Ascending aorta (tissue), 2 donors: ENCODE measurements at regions of chr11 and their contacts with region 1.

Region 1: GRCh38 chr11:19679952-19680828 is 32.4 kb upstream of the NAV2 start:
- DNase-seq: peak; percentile 81 to 98
- H3K4me3 ChIP-seq: no peak overlapping the region
- H3K27ac ChIP-seq: peak overlapping the region; percentile 87 to 93
- H3K4me1 ChIP-seq: peaks cover 11 to 71% of the 10 kb centered on the region in 2 donors
- H3K27me3 ChIP-seq: no peaks in the 10 kb centered on the region
- CTCF ChIP-seq: peak in 2 of 3 experiments; percentile 18 to 32

Region 2: DNA sequence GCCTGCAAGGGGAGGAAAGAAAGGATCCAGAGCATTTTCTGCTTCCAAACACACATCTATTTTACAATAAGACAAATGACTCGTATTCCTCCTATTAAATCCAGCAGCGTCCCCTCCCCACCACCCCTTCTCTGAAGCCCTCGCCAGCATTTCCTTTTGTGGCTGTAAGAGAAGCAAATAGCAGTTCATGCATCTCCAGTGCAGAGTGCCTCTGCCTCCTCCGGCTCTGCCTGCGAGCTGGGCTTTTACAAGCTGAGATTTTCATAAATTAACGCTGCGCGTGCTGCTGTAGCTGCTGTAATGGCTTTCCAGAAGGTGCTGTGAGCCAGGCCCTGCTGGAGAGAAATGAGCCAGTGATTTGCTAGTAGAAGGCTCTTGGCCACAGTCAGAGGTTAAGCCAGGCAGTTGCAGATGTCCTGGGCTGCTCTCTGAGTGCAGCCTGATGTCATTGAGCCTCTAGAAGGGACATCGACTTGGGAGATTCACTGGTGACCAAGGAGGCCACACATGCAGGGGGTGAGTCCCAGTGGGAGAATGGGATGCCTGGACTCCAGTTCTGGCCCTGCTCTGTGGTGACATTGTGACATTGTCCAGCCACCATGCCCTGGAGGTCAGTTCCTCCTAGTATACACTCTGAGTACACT is 102.1 kb before region 1 on chr11:
- intact Hi-C with region 1: loop called (anchors 5 kb)
- DNase-seq: peak in 1 of 2 donors; percentile 91
- H3K4me3 ChIP-seq: peak overlapping the region in 1 of 2 donors; percentile 52
- H3K27ac ChIP-seq: peak overlapping the region; percentile 93 to 98
- H3K4me1 ChIP-seq: peaks cover 43 to 72% of the 10 kb centered on the region in 2 donors
- H3K27me3 ChIP-seq: no peaks in the 10 kb centered on the region
- CTCF ChIP-seq: peak in 1 of 3 experiments; percentile 29

Region 3: DNA sequence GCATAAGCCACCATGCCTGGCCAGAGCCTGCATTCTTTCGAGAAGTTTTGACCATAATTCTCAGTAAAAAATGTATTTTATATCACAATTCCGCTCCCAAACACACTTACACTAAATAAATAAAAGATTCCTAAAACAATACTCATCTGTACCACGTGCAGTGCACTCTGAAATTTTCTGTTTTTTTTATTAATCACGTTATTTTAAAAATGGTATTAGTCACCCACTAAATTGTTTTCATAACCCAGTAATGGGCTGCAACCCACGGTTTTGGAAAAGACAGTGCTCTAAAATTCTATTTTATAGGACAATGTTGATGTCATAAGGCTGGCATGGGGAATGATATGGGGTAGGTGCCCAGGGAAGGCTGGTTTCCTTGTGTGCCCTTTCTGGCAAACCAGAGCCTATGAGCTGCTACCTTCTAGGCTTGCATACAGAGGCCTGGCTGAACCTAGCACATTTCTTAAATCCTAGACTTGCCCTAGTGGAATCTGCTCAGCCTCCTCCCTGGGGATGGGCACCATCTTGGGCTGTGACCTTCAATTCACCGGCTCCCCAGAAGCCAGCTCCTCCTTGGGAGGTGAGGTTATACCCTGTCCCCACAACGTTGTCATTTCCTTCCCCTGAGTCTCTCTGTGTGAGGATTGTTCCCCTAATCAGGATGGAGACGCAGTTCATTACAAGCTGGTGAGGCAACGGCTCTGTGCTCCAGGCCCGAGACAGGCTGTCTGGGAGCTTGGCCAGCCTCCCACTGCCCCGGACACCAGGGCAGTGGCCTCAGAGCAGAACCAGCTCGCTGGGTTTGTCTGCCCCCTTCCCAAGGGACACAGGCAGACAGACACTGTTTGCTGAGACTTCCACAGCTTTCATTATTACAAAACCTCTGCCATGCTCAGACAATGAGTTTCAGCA is 84.1 kb before region 1 on chr11:
- intact Hi-C with region 1: loop called (anchors 1 kb)
- DNase-seq: peak; percentile 64 to 95
- H3K4me3 ChIP-seq: peak overlapping the region in 1 of 2 donors; percentile 60
- H3K27ac ChIP-seq: peak overlapping the region; percentile 82 to 93
- H3K4me1 ChIP-seq: peaks cover 18 to 46% of the 10 kb centered on the region in 2 donors
- H3K27me3 ChIP-seq: no peaks in the 10 kb centered on the region
- CTCF ChIP-seq: no peak

Region 4: GRCh38 chr11:19628018-19628417 is 52.2 kb before region 1 on chr11:
- intact Hi-C with region 1: loop called (anchors 2 kb)
- DNase-seq: peak; percentile 58 to 96
- H3K4me3 ChIP-seq: no peak overlapping the region
- H3K27ac ChIP-seq: peak overlapping the region; percentile 84 to 87
- H3K4me1 ChIP-seq: peaks cover 12 to 46% of the 10 kb centered on the region in 2 donors
- H3K27me3 ChIP-seq: no peaks in the 10 kb centered on the region
- CTCF ChIP-seq: no peak

Region 5: DNA sequence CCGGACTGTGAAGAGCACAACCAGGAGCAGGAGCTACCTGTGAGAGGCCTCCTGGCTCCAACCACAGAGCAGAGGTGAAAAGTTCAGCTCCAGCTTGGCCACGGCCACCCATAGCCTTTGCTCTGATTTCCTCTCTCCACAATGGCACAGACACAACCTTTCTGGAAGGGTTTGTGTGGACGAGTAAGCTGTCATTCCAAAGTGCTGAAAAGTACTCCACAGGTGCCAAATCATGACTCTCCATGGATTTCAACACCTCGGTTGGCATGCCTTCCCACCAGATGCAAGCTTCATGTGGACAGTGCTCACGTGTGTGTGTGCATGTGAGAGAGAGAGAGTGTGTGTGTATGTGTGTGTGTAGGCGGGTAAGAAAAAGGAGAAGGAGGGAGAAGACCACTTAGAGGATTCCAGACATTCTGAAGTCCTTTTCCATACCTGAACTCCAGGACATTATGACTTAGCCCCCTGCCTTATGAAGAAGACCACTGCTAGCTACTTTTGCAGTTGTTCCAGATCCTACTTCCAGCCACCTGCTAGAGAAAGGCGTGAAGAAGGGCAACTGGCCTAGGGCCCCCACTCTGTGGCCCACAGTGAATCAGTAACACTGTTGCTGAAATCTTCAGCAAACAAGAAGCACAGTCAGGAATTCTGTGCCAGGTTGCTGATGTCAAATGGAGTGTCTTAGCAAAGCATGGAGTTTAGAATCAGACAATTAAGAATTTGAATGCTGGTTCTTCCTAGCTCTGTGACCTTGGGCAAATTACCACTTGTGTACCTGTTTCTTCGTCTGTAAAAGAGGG is 18.5 kb after region 1 on chr11:
- intact Hi-C with region 1: loop called (anchors 2 kb)
- DNase-seq: peak in 1 of 2 donors; percentile 79
- H3K4me3 ChIP-seq: no peak overlapping the region
- H3K27ac ChIP-seq: no peak overlapping the region
- H3K4me1 ChIP-seq: peaks cover 5 to 21% of the 10 kb centered on the region in 2 donors
- H3K27me3 ChIP-seq: no peaks in the 10 kb centered on the region
- CTCF ChIP-seq: no peak

Region 6: DNA sequence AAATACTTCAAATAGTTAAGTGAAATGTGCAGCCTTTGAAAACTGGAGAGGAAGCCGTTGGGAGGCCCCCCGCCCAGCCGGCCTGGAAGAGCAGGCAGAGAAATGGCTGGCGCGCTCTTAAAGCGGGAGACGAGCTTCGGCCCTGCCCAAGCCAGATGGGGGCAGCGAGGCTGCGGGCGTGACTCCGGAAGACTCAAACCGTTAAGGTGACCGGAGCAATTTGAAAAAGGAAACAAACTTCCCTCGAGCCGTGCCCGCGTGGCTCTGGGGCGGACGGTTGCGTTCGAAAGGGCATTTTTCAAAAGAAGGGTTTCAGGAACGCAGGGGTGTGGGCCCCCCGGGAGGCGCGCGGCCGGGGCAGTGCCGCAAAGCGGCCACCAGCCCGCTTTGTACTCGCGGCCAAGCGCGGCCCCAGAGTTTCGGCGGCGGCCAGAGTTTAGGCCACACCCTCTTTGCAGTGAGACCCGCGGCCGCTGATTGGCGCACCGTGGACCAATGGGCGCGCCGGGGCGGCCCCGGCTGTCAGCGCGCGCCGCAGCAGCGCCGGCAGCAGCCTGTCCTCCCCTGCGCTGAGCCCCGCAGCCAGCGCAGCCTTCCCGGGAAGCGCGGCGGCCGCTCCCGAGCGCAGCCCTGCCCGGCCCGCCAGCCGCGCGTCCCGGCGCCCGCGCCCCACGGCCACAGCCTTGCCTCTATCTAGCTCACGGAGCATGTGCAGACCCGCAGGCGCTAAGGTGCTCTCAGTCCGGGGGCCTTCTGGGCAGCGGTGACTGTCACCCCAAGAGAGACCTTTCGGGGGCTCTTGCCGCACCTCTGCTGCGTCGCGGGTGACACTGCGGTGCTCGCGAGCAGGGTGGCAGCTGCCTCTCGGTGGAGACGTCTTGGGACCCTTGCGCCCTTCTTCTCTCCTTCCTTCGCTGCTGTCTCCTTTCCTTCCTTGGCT is 32.4 kb after region 1 on chr11 and contains the start of gene NAV2:
- intact Hi-C with region 1: loop called (anchors 1 kb)
- DNase-seq: peak; percentile 80 to 95
- H3K4me3 ChIP-seq: peak within 1 kb of the TSS; percentile 92 to 98
- H3K27ac ChIP-seq: peak within 1 kb of the TSS; percentile 97 to 98
- H3K4me1 ChIP-seq: peaks cover 0 to 16% of the 10 kb centered on the region in 2 donors
- H3K27me3 ChIP-seq: no peaks in the 10 kb centered on the region
- CTCF ChIP-seq: peak in 1 of 3 experiments; percentile 9
- total RNA-seq, gene NAV2: 62.6 TPM

Region 7: DNA sequence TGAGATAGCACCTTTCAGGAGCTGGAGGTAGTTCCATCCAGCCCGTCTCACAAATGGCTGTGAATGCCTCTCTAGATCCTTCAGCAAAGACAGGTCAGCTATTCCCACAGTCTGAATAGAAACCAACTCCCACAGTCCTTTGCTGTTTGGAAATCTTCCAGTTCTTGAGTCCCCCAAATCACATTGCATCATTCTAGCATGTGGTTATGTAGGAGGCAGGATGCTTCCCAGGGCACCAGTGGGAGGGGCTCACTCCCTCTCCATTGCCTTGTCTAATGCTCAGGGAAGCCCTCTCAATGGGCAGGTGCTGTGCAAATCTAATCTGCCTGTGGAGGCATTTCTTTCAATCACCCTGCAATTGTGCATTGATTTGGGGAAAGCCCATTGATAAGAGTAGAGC is 47.1 kb after region 1 on chr11:
- intact Hi-C with region 1: loop called (anchors 2 kb)
- DNase-seq: no peak
- H3K4me3 ChIP-seq: no peak overlapping the region
- H3K27ac ChIP-seq: peak overlapping the region; percentile 97 to 98
- H3K4me1 ChIP-seq: peaks cover 47 to 90% of the 10 kb centered on the region in 2 donors
- H3K27me3 ChIP-seq: no peaks in the 10 kb centered on the region
- CTCF ChIP-seq: no peak

Region 8: DNA sequence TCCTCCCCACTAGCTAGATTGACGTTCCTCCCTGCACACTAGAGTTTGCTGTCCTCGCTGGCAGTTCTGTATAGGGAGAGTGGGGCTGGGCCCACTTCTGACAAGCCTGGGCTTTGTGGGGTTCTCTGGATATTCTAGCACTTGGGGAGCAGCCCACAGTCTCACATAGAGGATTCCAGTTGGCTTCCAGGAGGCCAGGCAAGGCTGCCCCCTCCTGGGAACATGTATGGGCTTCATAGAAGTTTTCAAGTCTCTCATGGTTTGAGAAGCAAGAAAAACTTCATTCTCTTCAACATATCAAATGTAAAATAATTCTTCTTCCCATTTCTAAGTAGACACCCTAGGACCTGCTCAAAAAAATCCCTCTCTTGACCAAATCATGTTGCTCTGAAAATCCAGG is 120.0 kb after region 1 on chr11:
- intact Hi-C with region 1: no loop called
- DNase-seq: no peak
- H3K4me3 ChIP-seq: no peak overlapping the region
- H3K27ac ChIP-seq: no peak overlapping the region
- H3K4me1 ChIP-seq: peaks cover 8 to 57% of the 10 kb centered on the region in 2 donors
- H3K27me3 ChIP-seq: no peaks in the 10 kb centered on the region
- CTCF ChIP-seq: peak in 1 of 3 experiments; percentile 31